ENCODE measurements at regions of chr11 and their contacts with region 1.

Region 1: DNA sequence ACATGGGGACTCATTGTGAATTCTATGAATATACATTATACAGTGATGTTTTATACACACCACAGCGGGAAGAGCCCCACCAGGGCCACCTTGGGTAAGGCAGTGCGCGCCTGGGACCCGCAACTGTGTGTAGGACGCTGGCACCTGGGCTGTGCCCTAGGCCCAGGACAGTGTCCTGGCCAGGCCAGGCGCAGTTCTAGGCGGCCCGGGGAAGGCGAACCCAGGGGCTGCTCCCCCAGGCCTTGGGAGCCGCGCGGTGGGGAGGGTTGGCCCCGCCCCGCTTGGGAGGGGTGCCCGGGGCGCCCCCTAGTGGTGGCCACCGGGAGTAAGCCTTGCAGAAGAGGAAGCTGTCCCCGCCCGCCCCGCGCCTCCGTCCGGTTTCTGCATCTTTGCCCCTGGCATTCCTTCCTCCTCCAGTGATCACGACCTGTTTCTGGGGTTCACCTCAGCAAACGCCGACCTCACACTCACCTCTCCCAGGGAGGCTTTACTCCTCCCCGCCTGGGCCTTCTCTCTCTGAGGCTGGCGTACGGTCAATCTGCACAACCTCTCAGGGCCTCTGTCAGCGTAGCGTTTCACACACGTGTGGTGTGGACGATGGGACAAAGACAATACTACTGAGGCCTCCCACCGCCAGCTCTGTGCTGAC is 9.5 kb upstream of the EHD1 start:
- DNase-seq: peak; percentile 91
- ATAC-seq: peak; percentile 88
- H3K4me3 Mint-ChIP-seq: peak overlapping the region; percentile 66
- H3K27ac Mint-ChIP-seq: no peak overlapping the region
- H3K4me1 Mint-ChIP-seq: peaks cover 14% of the 10 kb centered on the region
- H3K27me3 Mint-ChIP-seq: no peaks in the 10 kb centered on the region
- CTCF ChIP-seq: peak; percentile 99

Region 2: GRCh38 chr11:64810271-64810890 is 77.5 kb before region 1 on chr11 and contains the start of gene MEN1:
- CTCF ChIA-PET with region 1: interaction called, 14 read pairs
- POLR2A ChIA-PET with region 1: no interaction called
- DNase-seq: peak; percentile 98
- ATAC-seq: peak; percentile 99
- H3K4me3 Mint-ChIP-seq: peak within 1 kb of the TSS; percentile 91
- H3K27ac Mint-ChIP-seq: peak within 1 kb of the TSS; percentile 85
- H3K4me1 Mint-ChIP-seq: peaks cover 6% of the 10 kb centered on the region; the same call in 1 of the 2 replicates
- H3K27me3 Mint-ChIP-seq: no peaks in the 10 kb centered on the region
- CTCF ChIP-seq: no peak
- total RNA-seq, gene MEN1: 47.1 to 53.3 TPM (median 51.2 TPM) in 3 replicates

Region 3: GRCh38 chr11:64826578-64827450 is 61.1 kb before region 1 on chr11:
- CTCF ChIA-PET with region 1: no interaction called
- POLR2A ChIA-PET with region 1: no interaction called
- DNase-seq: no peak
- ATAC-seq: peak; percentile 94
- H3K4me3 Mint-ChIP-seq: no peak overlapping the region
- H3K27ac Mint-ChIP-seq: no peak overlapping the region
- H3K4me1 Mint-ChIP-seq: no peaks in the 10 kb centered on the region
- H3K27me3 Mint-ChIP-seq: no peaks in the 10 kb centered on the region
- CTCF ChIP-seq: no peak

Region 4: GRCh38 chr11:64916775-64917662 is 29.1 kb after region 1 on chr11 and contains the start of gene ATG2A:
- CTCF ChIA-PET with region 1: interaction called, 14 read pairs
- POLR2A ChIA-PET with region 1: no interaction called
- DNase-seq: peak; percentile 99
- ATAC-seq: peak; percentile 98
- H3K4me3 Mint-ChIP-seq: peak within 1 kb of the TSS; percentile 88
- H3K27ac Mint-ChIP-seq: peak within 1 kb of the TSS; percentile 98
- H3K4me1 Mint-ChIP-seq: peaks cover 13% of the 10 kb centered on the region
- H3K27me3 Mint-ChIP-seq: no peaks in the 10 kb centered on the region
- CTCF ChIP-seq: no peak
- total RNA-seq, gene ATG2A: 25.2 to 31.4 TPM (median 27.6 TPM) in 3 replicates

Region 5: DNA sequence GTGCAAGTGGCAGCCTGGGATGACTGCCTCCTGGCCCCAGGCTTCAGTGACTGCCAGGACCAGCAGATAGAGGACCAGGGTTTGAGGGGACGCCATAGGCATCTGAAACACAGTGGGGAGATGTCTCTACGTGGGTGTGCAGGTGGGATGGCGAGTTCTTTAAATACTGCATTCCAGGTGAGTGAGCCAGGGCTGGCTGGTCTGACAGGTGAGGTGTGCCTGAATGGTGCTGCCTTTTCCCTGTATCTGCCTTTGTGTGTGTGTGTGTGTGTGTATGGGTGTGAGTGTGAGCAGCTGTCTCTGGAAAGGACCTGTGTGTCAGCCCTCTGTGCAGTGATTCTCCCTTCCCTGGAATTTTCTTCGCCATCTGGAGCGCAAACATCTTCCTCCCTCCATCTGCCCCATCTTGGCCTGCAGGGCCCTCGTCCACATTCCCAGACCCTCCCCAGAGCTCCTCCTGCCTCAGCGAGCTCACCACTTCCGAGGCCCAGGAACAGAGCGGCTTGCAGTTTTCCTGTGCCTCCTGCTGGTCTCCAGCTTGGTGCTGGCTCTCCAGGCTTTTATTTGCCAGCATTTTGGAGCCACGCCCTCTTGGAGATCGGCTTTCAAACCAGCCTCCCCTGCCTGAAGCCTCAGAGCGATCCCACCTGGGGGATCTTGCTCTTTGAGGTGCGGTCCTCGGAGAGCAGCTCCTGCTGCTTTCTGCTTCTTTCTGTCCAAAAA is 47.6 kb after region 1 on chr11 and contains the start of gene GPHA2:
- CTCF ChIA-PET with region 1: interaction called, 30 read pairs
- POLR2A ChIA-PET with region 1: no interaction called
- DNase-seq: peak; percentile 80
- ATAC-seq: peak; percentile 88
- H3K4me3 Mint-ChIP-seq: peak within 1 kb of the TSS; percentile 50
- H3K27ac Mint-ChIP-seq: peak within 1 kb of the TSS; percentile 90
- H3K4me1 Mint-ChIP-seq: peaks cover 24% of the 10 kb centered on the region
- H3K27me3 Mint-ChIP-seq: no peaks in the 10 kb centered on the region
- CTCF ChIP-seq: no peak
- total RNA-seq, gene GPHA2: 1.0 to 1.6 TPM (median 1.6 TPM) in 3 replicates

Region 6: GRCh38 chr11:65471410-65471762 is 583.5 kb after region 1 on chr11:
- CTCF ChIA-PET with region 1: no interaction called
- POLR2A ChIA-PET with region 1: no interaction called
- DNase-seq: peak; percentile 69
- ATAC-seq: peak; percentile 87
- H3K4me3 Mint-ChIP-seq: no peak overlapping the region
- H3K27ac Mint-ChIP-seq: no peak overlapping the region
- H3K4me1 Mint-ChIP-seq: peaks cover 2% of the 10 kb centered on the region
- H3K27me3 Mint-ChIP-seq: peaks cover 11% of the 10 kb centered on the region
- CTCF ChIP-seq: 0 out of 2 replicates have a peak, but pooled peaks have one; percentile 16